ENCODE measurements at regions of chr2 and their contacts with region 1.

Region 1: DNA sequence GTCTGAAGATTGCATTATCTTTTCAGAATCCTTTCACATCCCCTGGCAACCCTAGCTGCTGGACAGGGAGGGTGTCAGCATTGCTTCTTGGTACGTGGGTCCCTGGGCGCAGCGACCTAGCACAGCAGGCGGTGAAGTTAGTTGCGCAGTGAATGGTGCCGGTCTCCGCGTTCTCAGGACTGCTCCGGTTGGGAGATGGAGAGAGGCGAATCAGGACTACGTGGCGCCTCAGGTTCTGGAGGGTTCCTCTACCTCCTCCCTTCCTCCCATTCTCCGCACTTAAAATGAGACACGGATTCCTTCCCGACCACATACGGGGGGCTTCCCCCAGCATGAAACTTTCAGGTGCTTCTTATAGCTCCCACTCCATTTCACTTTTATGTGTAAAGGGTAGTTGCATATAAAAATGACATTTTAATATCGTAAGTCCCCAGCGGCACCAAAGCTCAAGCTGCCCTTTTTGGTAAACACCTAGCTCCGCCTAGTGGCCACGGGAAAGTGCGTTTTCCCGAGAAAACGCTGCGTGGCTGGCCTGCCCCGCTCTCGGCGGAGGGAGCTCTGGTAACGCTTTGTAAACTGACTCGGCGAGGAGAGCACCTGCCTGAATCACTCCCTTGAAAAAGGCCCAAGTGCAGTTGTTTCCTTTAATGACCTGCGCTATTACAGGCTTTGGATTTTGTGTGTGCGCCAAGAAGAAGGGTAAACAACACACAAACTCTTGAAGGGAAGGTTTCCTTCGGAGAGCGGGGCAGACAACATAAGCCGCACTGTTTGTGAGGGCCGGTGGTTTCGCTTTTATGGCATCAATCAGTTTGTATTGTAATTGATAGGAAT is 32.9 kb upstream of the INHBB start:
- DNase-seq: peak; percentile 92
- H3K4me3 Mint-ChIP-seq: peak overlapping the region; percentile 65
- H3K27ac Mint-ChIP-seq: no peak overlapping the region
- H3K4me1 Mint-ChIP-seq: peaks cover 32% of the 10 kb centered on the region
- H3K27me3 Mint-ChIP-seq: no peaks in the 10 kb centered on the region

Region 2: GRCh38 chr2:119753041-119753929 is 559.8 kb before region 1 on chr2:
- CTCF ChIA-PET with region 1: no interaction called
- intact Hi-C with region 1: loop called (anchors 1 kb)
- DNase-seq: peak; percentile 43
- H3K4me3 Mint-ChIP-seq: no peak overlapping the region
- H3K27ac Mint-ChIP-seq: no peak overlapping the region
- H3K4me1 Mint-ChIP-seq: peaks cover 14% of the 10 kb centered on the region
- H3K27me3 Mint-ChIP-seq: no peaks in the 10 kb centered on the region

Region 3: DNA sequence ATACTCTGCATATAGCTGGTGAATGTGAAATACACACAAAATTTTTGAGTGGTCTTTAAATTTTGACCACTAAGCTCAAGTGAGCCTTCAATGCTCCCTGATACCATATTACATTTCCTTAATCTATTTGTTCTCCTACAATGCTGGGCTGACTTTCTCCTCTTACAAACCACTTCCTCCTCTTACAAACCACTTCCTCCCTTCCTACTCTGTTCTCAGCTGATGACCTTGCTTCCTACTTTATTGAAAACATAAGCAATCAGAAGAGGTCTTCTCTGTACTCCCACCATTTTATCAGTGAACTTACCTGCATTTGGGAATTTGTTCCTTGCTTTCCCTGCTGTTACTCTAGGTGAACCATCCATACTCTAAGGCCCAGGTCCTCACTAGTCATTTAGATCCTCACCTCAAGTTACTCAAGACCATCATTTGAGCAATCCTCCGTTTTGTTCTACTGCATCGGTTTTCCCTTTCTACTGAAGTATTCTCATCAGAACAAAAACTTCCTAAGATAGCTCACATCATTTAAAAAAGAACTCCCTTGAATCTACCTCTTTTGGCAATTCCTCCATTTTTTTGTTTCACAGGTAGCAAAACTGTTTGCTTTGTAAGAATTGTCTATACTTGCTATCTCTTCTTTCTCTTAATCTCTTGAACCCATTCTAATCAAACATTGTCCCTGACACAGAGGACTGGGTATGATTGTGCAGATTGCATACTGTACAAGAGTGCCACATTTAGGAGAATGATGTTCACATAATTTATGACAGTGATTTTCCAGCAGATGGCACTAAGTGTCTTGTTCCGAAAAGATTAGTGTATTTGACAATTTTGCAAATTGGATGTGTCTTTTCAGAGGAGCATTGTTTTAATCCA is 203.7 kb before region 1 on chr2:
- CTCF ChIA-PET with region 1: interaction called, 15 read pairs
- intact Hi-C with region 1: loop called (anchors 1 kb)
- DNase-seq: no peak
- H3K4me3 Mint-ChIP-seq: no peak overlapping the region
- H3K27ac Mint-ChIP-seq: peak overlapping the region; percentile 78
- H3K4me1 Mint-ChIP-seq: peaks cover 27% of the 10 kb centered on the region
- H3K27me3 Mint-ChIP-seq: no peaks in the 10 kb centered on the region

Region 4: DNA sequence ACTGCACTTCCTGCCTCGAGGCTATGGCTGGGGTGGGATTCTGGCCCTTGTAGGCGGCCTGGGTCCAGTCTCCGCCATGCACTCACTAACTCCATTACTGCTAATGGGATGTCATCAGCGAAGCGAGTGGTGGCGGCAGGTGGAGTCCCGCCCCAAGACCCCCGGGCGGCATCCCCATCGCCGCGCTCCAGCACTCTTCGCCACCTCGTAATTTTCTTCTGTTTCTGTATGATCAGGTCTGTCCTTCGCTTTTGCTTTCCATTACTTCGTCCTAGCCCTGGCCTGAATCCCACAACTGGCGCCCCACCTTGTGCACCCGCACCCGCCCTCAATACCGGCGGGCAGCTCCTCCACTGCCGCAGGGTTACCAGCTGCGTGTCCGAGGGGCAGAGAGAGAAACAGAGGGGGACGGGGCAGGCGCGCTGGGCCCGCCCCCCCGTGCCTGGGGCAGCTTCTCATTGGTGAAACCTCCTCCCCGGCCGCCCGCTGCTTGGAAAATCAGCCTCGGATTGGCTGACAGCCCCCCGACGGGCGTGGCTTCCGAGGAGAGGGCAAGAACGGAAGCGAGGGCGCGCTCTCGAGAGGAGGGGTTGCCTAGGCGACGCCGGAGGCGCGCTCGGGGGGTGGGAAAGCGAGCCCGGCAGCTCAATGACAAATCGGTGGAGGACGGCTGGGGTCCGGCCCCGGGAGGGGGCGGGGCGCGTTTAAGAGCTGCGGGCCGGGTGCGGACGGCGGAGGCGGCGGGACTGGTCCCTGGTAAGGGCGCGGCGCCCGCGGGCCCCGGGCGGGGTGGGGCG is 60.7 kb before region 1 on chr2 and contains the start of gene RALB:
- CTCF ChIA-PET with region 1: interaction called, 30 read pairs
- intact Hi-C with region 1: loop called (anchors 1 kb)
- DNase-seq: peak; percentile 99
- H3K4me3 Mint-ChIP-seq: peak within 1 kb of the TSS; percentile 96
- H3K27ac Mint-ChIP-seq: peak within 1 kb of the TSS; percentile 74
- H3K4me1 Mint-ChIP-seq: peaks cover 40% of the 10 kb centered on the region
- H3K27me3 Mint-ChIP-seq: no peaks in the 10 kb centered on the region
- total RNA-seq, gene RALB: 16.4 to 19.3 TPM

Region 5: DNA sequence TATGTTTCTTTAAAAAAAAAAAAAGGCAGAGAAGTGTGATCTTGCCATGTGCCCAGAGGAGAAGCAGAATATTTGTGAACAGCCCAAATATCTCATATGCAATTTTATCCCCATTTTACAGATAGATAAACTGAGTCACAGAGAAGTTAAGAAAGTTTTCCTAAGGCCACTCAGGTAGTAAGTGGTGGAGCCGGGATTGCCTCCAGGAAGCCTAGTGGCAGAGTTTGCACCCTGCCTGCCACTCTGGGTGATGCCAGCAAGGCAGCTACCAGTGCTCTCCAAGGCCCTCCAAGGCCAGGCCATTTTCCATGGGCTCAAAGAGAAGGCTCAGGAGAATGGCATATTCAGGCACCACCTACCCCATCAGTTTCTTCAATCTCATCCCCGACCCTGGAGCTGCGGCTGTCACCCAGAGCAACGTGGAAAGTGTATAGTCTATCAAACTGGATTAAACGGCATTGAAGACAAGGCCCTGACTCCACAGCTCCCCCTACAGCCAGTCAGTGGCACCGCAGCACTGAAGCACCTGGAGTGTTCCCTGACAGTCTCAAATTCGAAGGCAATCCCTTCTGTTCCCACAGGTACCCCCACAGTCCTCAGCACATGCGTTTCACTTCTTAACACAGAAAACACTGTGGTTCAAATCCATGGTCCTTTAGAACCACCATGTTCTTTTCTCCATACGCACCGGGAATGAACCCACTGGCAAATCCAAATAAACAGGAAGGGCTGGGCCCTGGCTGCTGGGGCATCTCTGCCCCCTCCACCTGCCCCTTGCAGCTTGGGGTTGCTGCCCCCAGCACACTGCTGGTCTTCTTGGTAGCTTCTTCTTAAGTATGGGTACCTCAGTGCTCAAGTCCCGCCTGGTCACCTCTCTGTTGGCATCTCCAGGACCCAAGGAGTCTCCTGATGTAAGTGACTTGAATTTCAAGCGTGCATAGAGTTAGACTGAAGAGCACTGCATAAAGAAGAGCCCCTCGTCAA is 208.1 kb after region 1 on chr2:
- CTCF ChIA-PET with region 1: no interaction called
- intact Hi-C with region 1: loop called (anchors 1 kb)
- DNase-seq: peak; percentile 61
- H3K4me3 Mint-ChIP-seq: no peak overlapping the region
- H3K27ac Mint-ChIP-seq: no peak overlapping the region
- H3K4me1 Mint-ChIP-seq: no peaks in the 10 kb centered on the region
- H3K27me3 Mint-ChIP-seq: peaks cover 38% of the 10 kb centered on the region

Region 6: DNA sequence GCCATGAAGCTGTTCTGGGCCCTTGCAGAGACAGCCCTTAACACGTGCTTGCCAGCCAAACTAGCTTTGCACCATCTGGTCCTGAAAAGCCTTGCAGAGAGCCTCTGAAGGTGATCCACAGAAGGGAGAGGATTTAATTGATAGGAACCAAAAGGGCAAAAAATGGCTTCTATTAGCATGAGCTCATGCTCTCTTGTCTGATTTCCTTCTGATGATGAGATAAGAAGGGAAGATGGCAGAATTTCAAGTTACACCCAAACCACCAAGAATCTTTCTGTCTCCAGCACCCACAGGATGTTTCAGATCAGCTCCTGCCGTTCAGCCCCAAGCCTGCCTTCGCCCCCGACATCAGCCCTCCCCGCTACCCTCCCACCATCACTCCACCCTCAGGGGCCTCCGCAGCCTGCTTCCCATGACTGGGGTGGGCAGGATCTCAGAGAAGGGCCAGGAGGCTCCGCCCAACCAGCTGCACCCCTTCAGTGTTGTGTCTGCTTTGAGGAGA is 399.2 kb after region 1 on chr2:
- CTCF ChIA-PET with region 1: no interaction called
- intact Hi-C with region 1: no loop called
- DNase-seq: no peak
- H3K4me3 Mint-ChIP-seq: no peak overlapping the region
- H3K27ac Mint-ChIP-seq: no peak overlapping the region
- H3K4me1 Mint-ChIP-seq: no peaks in the 10 kb centered on the region
- H3K27me3 Mint-ChIP-seq: peaks cover 16% of the 10 kb centered on the region

Measured in activated naive CD4-positive, alpha-beta T cell treated with anti-CD3 and anti-CD28 coated beads for 36 hours (primary cell).